ENCODE measurements at regions of chr17 and their contacts with region 1.

Region 1: DNA sequence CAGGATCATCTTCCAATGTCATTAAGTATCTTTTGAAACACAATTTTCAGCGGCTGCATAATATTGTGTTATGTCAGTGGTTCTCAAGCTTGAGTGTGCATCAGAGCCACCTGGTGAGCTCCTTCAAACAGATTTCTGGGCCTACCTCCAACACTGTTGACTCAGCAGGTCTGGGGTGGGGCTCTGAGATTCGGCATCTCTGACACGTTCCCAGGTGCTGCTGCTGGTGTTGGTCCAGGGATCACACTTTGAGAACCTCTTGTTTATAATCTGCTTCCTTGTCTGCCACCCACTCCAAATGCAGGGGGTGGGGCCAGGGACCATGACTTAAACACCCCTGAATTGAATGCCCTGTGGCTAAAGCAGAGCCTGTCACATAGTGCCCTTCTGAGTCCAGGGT is 73.8 kb upstream of the HNF1B start:
- DNase-seq: peak; percentile 47
- H3K4me3 ChIP-seq: no peak overlapping the region
- H3K27ac ChIP-seq: no peak overlapping the region
- H3K27me3 ChIP-seq: no peaks in the 10 kb centered on the region
- CTCF ChIP-seq: no peak

Region 2: GRCh38 chr17:37466471-37466870 is 352.2 kb before region 1 on chr17:
- CTCF ChIA-PET with region 1: no interaction called
- POLR2A ChIA-PET with region 1: no interaction called
- DNase-seq: no peak
- H3K4me3 ChIP-seq: no peak overlapping the region
- H3K27ac ChIP-seq: no peak overlapping the region
- H3K27me3 ChIP-seq: no peaks in the 10 kb centered on the region
- CTCF ChIP-seq: no peak

Region 3: GRCh38 chr17:37527249-37527851 is 291.3 kb before region 1 on chr17:
- CTCF ChIA-PET with region 1: interaction called, 32 read pairs
- POLR2A ChIA-PET with region 1: no interaction called
- DNase-seq: peak; percentile 26
- H3K4me3 ChIP-seq: no peak overlapping the region
- H3K27ac ChIP-seq: no peak overlapping the region
- H3K27me3 ChIP-seq: no peaks in the 10 kb centered on the region
- CTCF ChIP-seq: peak; percentile 82

Region 4: DNA sequence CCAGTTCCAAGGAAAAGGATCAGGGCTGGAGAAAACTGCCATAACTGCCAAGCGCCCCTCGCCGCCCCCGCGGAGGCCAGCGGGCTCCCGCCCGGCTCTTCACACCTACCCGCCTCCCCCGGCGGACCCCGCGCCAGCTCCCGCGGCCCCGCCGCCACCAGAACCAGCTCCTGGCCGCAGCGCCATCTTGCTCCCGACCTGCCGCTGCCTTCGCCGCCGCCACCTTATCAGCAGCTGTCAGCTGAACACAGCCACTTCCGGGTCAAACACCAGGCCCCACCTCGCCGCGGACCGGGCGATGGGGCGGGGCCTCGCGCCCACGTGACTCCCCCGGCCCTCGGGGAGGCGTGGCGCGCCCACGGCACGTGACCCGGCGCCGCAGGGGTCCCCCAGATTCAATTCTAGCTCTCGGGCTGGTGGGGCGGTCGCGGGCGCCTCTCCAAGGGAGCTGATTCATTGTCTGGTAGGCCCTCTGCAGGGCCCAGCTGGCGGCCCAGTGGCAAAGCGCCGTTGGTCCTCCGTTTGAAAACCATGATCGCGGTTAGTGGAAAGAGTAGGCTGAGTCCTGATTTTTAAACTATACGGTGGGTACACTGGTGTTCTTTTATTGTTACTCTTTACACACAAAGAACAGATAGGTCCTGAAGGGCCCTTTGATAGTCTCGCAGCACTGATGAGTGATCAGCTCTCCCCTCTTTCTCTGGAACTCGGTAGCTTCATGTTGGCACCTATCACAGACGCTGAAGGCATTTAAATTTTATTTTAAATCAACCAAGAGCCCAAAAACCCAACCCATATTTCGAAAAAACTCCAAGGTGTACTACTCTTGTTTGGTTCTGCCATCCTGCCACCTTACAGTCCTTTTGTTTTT is 209.3 kb before region 1 on chr17 and contains the start of gene SYNRG:
- CTCF ChIA-PET with region 1: interaction called, 24 read pairs
- POLR2A ChIA-PET with region 1: interaction called, 10 read pairs
- DNase-seq: peak; percentile 86
- H3K4me3 ChIP-seq: peak within 1 kb of the TSS; percentile 88
- H3K27ac ChIP-seq: peak within 1 kb of the TSS; percentile 72
- H3K27me3 ChIP-seq: no peaks in the 10 kb centered on the region
- CTCF ChIP-seq: peak; percentile 43
- polyA plus RNA-seq, gene SYNRG: 24.9 and 26.2 TPM in 2 replicates

Region 5: GRCh38 chr17:37650419-37651003 is 168.2 kb before region 1 on chr17:
- CTCF ChIA-PET with region 1: interaction called, 102 read pairs
- POLR2A ChIA-PET with region 1: no interaction called
- DNase-seq: no peak
- H3K4me3 ChIP-seq: no peak overlapping the region
- H3K27ac ChIP-seq: no peak overlapping the region
- H3K27me3 ChIP-seq: no peaks in the 10 kb centered on the region
- CTCF ChIP-seq: peak; percentile 52

Region 6: GRCh38 chr17:37744961-37745800 is 73.5 kb before region 1 on chr17 and contains the start of gene HNF1B:
- CTCF ChIA-PET with region 1: interaction called, 13 read pairs
- POLR2A ChIA-PET with region 1: no interaction called
- DNase-seq: no peak
- H3K4me3 ChIP-seq: no peak within 1 kb of the TSS
- H3K27ac ChIP-seq: no peak within 1 kb of the TSS
- H3K27me3 ChIP-seq: peaks cover 73% of the 10 kb centered on the region
- CTCF ChIP-seq: no peak
- polyA plus RNA-seq, gene HNF1B: not detected in 2 replicates

Region 7: DNA sequence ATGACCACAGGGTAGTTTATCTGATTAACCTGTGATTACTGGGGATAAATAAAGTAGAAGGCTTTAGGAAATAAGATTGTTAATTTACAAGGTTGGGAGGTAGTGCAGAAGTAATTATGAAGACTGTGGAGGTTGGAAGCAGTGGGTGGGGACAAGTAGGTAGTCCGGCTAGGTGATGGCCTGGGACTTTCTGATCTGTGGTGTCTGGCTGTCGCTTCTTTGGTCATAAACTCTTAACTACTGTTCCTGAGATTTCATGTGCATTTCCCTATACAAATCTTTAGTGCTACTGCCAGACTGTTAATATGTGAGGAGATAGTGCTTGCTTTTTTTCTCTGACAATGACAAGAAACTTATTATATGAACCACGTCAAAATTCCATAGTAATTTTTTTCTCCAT is 54.3 kb before region 1 on chr17:
- CTCF ChIA-PET with region 1: interaction called, 10 read pairs
- POLR2A ChIA-PET with region 1: no interaction called
- DNase-seq: no peak
- H3K4me3 ChIP-seq: no peak overlapping the region
- H3K27ac ChIP-seq: no peak overlapping the region
- H3K27me3 ChIP-seq: peaks cover 16% of the 10 kb centered on the region
- CTCF ChIP-seq: no peak

Region 8: DNA sequence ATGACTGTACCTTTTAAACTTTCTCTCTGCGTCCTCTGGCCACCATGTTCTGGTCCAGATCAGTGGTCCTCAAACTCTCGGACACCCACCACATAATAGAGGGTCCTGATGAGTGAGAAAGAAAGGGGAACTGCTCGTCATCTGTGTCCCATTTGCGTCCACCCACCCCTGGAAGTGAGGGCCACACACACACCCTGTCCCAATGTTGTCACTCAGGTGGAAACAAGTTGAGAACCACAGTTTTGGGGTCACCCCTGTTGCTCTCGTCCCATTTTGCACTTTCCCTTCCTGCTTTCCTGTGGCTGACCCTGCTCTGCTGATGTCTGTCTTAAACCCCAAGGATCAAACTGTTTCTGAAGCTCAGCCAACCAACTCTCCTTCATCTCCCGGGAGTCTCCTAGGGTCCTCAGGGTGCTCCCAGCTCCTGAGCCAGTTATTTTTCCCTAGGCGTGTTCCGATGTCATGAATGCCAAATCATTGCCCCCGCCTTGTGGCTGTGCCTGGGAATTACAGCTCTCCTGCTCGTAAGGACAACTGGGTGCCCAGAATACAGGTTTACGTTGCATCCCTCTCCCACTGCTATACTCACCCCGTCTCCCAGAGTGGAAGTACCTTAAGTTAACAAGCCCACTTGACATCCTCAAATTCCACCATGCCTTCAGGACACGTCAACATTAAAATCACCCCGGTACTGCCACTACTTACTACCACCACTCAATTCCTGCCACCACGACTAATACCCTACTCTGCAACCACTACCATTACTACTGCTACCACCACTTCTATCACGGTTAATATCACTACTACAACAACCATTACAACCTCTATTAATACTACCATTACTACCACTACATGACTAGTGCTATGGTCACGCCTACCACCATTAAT is 47.8 kb before region 1 on chr17:
- CTCF ChIA-PET with region 1: interaction called, 24 read pairs
- POLR2A ChIA-PET with region 1: no interaction called
- DNase-seq: no peak
- H3K4me3 ChIP-seq: no peak overlapping the region
- H3K27ac ChIP-seq: no peak overlapping the region
- H3K27me3 ChIP-seq: peaks cover 4% of the 10 kb centered on the region
- CTCF ChIP-seq: peak; percentile 87